ENCODE measurements at regions of chr9 and their contacts with region 1.

Region 1: GRCh38 chr9:123049589-123050222 is 16.2 kb downstream of the GPR21 start:
- DNase-seq: no peak
- H3K4me3 ChIP-seq: no peak overlapping the region
- CTCF ChIP-seq: no peak

Region 2: DNA sequence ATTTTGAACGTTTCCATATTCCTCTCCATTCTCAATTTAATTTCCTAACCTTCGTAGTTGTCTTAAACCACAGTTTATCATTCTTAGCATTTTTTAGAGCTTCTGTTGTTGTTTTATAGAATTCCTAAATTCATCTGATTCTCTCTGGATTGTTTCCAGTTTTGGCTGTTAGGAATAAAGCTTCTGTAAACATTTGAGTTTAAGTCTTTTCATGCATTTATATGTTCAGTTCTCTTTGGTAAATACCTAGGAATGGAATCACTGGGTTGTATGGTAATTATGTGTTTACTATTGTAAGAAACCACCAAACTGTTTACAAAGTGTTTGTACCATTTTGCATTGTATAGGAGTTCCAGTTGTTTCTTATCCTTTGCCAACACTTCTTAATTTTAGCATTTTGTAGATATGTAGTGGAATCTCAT is 13.5 kb after region 1 on chr9:
- CTCF ChIA-PET with region 1: interaction called, 11 read pairs
- POLR2A ChIA-PET with region 1: interaction called, 6 read pairs
- DNase-seq: peak; percentile 55
- H3K4me3 ChIP-seq: no peak overlapping the region
- CTCF ChIP-seq: no peak

Measured in AG04449 (cell line).